ENCODE measurements at regions of chr2 and their contacts with region 1.

Region 1: DNA sequence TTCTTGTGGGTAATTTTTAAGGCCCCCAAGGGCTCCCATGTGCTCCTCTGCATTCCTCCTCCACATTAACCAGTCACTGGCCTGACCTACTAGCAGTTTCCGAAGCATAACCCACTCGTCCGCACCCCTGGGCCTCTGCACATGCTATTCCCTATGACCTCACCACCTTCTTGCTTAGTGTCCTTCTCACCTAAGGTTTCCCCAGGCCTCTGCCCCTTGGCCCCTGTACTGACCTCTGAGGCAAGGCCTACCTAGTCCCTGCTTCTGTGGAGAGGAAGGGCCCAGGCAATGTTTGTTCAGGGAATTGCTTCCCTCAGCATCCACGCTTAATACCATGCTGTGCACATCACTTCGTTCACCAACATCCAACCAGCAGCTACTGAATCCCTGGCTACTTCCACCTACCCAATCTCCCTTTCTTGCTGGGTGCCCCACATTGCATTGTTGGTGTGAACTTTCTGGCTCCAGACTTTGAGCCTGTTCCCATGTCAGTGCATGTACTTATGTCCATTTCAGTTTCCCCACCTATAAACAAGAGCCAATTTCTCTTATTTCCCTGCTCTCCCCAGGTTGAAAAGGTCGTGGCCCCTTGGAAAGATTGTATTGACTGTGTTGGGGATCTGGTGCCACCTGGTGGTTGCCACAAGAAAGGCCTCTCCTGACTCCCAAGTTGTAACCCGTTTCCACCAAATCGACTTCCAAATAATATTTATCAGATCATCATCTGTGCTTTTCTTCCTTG is 19.2 kb upstream of the TMEM177 start:
- DNase-seq: peak in 1 of 3 donors; percentile 22
- ATAC-seq: peak in 1 of 2 donors; percentile 46
- H3K4me3 ChIP-seq: no peak overlapping the region
- H3K27ac ChIP-seq: no peak overlapping the region
- H3K4me1 ChIP-seq: no peaks in the 10 kb centered on the region
- H3K27me3 ChIP-seq: no peaks in the 10 kb centered on the region

Region 2: GRCh38 chr2:119517433-119517832 is 142.3 kb before region 1 on chr2:
- intact Hi-C with region 1: loop called in 1 of 4 experiments (anchors 5 kb)
- DNase-seq: peak; percentile 49 to 78 (median 76)
- ATAC-seq: peak; percentile 61 to 71
- H3K4me3 ChIP-seq: no peak overlapping the region
- H3K27ac ChIP-seq: no peak overlapping the region
- H3K4me1 ChIP-seq: no peaks in the 10 kb centered on the region
- H3K27me3 ChIP-seq: no peaks in the 10 kb centered on the region

Region 3: DNA sequence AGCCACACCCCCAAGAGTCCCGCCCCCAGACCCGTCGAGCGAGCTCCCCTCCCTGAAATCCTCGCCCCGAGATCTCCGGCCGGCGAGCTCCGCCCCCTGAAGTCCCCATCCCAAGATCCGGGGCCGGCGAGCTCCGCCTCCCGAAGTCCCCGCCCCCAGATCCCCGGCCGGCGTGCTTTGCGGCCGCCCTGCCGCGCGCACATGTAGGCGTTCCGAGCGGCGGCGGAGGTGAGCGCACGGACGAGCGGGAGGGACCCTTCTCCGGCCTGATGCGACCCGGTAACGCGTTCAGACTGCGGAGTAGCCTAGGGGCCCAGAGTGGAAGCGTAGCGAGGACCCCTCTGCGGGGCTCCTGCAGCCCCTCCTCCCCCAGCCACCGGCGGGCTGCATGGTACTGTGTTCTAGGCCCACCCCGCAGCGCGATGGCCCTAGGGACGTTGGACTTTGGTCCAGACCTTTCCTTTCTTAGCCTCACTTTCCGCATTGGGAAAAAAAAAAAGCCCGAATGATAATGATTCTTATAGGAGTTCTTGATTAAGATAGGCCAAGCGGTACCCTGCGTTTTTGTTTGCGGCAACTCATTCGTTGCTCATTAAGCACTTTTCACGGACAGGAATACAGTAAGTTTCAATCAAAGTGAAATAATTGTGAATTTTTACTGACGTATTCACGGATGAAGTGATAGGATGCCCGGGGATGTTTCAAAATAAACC is 19.4 kb after region 1 on chr2 and contains the start of gene TMEM177:
- intact Hi-C with region 1: no loop called
- DNase-seq: peak; percentile 90 to 96 (median 96)
- ATAC-seq: peak; percentile 94 to 97
- H3K4me3 ChIP-seq: peak within 1 kb of the TSS; percentile 83
- H3K27ac ChIP-seq: no peak within 1 kb of the TSS
- H3K4me1 ChIP-seq: peaks cover 3% of the 10 kb centered on the region
- H3K27me3 ChIP-seq: no peaks in the 10 kb centered on the region
- total RNA-seq, gene TMEM177: 6.6 to 10.9 (median 9.9) TPM

Measured in right cardiac atrium (tissue), 5 donors.